Activated CD4-positive, alpha-beta memory T cell treated with anti-CD3 and anti-CD28 coated beads, Interleukin-2, amount 10 ng/mL, durations not matched to agents 7 days and 5 days (primary cell): ENCODE measurements at regions of chr15 and their contacts with region 1.

Region 1: DNA sequence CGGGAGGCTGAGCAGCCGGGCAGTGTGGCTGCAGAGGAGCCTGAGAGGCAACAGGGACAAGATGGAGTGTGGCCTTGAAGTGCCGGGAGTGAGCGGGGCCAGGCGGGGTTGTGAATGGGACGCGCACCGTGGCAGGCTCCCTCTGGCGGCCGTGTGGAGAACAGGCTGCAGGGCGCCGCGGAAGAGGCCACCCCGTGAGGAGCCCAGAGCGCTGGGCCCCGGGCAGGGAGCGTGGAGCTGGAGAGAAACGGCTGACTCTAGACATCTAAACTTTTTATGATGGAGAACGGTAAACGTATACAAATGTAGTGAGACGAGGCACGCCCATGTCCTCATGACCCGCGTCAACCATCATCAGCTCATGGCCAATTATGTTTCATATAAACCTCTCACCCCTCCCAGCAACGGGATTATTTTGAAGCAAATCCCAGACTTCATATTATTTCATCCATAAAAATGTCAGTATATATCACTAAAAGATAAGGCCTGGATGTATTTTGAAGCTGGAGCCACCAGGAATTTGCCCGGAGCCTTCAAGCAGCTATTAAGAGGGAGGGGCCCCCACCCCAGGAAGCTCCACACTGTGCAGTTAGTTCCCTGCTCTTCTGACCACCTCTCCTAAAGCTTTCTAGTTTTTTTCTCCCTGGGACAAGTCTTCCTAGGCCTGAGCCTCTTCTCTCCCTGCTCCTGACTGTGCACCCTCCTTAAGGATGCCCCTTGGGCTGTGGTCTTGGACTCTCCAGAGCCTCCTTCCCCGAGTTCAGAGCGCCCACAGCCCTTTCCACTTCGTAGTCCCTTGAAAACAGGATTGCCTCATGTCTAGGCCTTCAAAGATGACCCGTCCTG is 149.4 kb downstream of the SMAD6 start:
- DNase-seq: peak; percentile 80
- H3K4me3 Mint-ChIP-seq: no peak overlapping the region
- H3K27ac Mint-ChIP-seq: no peak overlapping the region
- H3K4me1 Mint-ChIP-seq: peaks cover 8% of the 10 kb centered on the region
- H3K27me3 Mint-ChIP-seq: peaks cover 4% of the 10 kb centered on the region

Region 2: DNA sequence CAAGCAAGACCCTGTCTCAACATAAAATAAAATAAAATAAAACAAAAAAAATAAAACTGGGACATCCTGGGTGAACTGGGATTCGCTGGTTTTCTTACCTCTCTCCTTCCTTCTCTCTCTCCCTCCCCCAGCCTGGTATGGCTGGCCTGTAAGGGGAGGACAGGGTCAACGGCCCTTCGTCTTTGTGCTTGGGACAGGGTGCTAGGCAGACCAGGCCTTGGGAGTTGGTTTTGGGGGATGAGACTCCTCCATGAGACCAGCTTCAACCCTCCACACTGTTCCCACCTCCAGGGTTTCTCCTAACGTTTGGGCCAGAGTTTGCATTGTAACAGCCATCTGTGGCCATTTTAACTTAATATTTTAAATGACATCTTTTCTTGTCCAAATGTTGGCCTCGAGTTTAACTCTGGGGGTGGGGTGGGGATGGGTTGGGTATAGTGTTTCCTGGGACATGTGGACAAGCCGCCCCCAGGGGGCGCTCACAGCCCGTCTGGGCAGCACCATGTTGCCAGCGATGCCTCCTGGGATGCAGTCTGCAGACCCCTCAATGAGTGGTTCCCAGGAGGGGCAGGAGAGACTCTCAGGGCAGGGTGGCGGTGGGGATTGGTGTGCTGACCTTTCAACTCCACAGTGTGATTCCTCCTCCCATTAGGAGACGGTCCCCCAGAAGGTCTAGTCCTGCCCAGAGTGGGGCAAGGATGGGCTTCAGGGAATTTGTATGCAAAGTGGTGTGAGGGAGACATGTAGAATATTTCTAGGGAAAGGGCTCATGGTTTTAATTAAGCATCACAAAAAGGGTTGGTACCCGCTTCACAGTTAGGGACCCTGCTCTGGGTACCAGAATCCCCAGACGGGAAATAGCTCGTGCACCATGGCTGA is 247.9 kb before region 1 on chr15:
- CTCF ChIA-PET with region 1: interaction called, 48 read pairs
- POLR2A ChIA-PET with region 1: interaction called, 3 read pairs
- DNase-seq: peak; percentile 69
- H3K4me3 Mint-ChIP-seq: no peak overlapping the region
- H3K27ac Mint-ChIP-seq: no peak overlapping the region
- H3K4me1 Mint-ChIP-seq: peaks cover under 1% of the 10 kb centered on the region
- H3K27me3 Mint-ChIP-seq: no peaks in the 10 kb centered on the region

Region 3: GRCh38 chr15:66619151-66619903 is 232.1 kb before region 1 on chr15:
- CTCF ChIA-PET with region 1: interaction called, 48 read pairs
- POLR2A ChIA-PET with region 1: no interaction called
- DNase-seq: peak; percentile 60
- H3K4me3 Mint-ChIP-seq: no peak overlapping the region
- H3K27ac Mint-ChIP-seq: no peak overlapping the region
- H3K4me1 Mint-ChIP-seq: peaks cover 5% of the 10 kb centered on the region
- H3K27me3 Mint-ChIP-seq: peaks cover 29% of the 10 kb centered on the region

Region 4: DNA sequence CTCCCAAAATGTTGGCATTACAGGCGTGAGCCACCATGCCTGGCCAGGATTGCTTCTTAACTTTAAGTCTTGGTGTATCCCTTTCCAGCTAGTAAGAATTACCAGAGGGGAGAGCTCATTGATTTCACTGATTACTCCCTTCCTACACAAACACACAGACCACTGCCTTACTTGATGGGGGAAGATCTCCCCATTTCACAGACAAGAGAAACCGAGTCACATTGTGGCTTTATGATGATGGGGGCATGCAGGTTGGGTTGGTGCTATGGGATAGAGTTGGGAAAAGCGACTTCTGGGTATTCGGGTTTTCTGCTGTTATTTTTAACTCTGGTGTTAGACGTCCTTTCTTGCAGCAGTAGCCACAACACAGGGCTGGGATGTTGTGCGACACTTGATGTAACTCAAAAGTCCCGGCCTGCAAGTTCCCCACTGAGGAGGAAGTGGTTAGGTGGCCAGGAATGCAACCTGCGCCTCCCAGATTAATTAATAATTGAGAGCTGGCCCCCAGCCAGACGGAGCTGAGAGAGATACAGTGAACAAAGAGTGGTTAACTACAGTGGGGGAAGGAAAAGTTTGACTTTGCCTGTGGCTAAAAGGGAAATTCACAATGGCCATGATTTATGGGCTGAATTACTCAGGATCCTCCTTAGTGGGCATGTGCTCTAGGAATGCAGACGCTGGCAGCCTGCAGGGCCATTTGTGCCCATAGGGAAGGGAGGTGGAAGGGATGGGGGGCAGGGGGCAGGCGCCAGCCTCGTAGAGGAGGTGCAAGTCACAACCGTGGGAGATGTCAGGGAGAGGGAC is 85.8 kb before region 1 on chr15:
- CTCF ChIA-PET with region 1: no interaction called
- POLR2A ChIA-PET with region 1: no interaction called
- DNase-seq: no peak
- H3K4me3 Mint-ChIP-seq: no peak overlapping the region
- H3K27ac Mint-ChIP-seq: no peak overlapping the region
- H3K4me1 Mint-ChIP-seq: peaks cover 4% of the 10 kb centered on the region
- H3K27me3 Mint-ChIP-seq: peaks cover 53% of the 10 kb centered on the region

Region 5: DNA sequence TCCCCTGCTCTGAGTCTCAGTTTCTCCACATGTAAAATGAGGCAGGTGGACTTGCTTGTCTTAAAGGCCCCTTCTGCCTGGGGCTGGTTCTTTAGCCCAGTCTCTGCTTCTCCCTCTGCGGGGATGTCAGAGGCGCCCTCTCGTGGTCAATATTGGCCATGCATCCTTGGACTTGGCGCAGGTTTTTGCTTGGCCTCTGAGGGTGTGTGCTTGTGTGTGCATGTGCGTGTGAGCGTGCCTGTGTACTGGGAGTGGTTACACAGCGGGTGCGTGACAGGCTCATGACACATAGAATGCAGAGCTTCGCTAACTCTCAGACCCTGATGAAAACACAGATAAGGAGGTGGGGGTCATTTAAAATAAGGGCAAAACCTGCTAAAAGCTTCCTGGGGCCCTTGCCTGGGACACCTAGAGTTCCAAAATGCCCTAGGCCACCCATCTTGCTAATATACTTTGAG is 11.5 kb after region 1 on chr15:
- CTCF ChIA-PET with region 1: interaction called, 41 read pairs
- POLR2A ChIA-PET with region 1: interaction called, 4 read pairs
- DNase-seq: peak; percentile 82
- H3K4me3 Mint-ChIP-seq: no peak overlapping the region
- H3K27ac Mint-ChIP-seq: no peak overlapping the region
- H3K4me1 Mint-ChIP-seq: peaks cover 12% of the 10 kb centered on the region
- H3K27me3 Mint-ChIP-seq: peaks cover 16% of the 10 kb centered on the region